A673 (cell line): ENCODE measurements at regions of chr17 and their contacts with region 1.

Region 1: DNA sequence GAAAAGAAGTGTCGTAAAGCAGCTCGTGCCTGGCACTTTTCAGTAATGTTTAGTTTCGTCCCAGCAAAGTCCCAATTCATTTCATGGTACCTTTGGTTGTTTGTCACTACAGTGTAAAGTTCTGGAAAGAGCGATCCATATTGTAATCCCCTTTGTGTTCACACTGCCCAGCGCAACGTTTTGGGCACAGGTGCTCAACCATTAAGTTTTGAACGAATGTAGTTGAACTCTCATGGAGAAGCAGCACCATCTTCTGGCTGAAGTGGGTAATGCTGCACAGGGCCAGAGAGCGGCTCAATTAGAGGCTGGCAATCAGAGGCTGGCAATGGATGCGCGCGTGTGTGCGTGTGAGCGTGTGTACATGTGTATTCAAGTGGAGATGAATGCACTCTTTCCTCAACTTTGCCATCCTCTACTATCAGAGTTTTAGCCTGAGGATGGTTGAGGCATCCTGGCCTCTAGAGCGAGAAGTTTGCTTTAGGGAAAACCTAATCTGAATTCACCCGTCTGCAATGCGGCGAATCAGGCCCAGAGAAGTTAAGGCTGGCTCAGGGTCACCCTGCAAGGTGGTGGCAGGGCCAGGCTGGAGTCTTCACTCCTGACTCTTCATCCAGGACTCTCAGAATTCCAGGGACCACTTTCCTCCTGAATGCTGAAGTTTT is 29.9 kb downstream of the DYNLL2 start:
- DNase-seq: peak; percentile 83
- H3K4me3 ChIP-seq: no peak overlapping the region
- H3K27ac ChIP-seq: no peak overlapping the region
- H3K4me1 ChIP-seq: no peaks in the 10 kb centered on the region
- H3K27me3 ChIP-seq: no peaks in the 10 kb centered on the region
- CTCF ChIP-seq: peak; percentile 98

Region 2: GRCh38 chr17:57130761-57131461 is 982.2 kb before region 1 on chr17:
- CTCF ChIA-PET with region 1: no interaction called
- POLR2A ChIA-PET with region 1: no interaction called
- intact Hi-C with region 1: loop called (anchors 5 kb)
- DNase-seq: peak; percentile 87
- H3K4me3 ChIP-seq: peak overlapping the region; percentile 28
- H3K27ac ChIP-seq: no peak overlapping the region
- H3K4me1 ChIP-seq: peaks cover 4% of the 10 kb centered on the region
- H3K27me3 ChIP-seq: no peaks in the 10 kb centered on the region
- CTCF ChIP-seq: peak; percentile 75

Region 3: DNA sequence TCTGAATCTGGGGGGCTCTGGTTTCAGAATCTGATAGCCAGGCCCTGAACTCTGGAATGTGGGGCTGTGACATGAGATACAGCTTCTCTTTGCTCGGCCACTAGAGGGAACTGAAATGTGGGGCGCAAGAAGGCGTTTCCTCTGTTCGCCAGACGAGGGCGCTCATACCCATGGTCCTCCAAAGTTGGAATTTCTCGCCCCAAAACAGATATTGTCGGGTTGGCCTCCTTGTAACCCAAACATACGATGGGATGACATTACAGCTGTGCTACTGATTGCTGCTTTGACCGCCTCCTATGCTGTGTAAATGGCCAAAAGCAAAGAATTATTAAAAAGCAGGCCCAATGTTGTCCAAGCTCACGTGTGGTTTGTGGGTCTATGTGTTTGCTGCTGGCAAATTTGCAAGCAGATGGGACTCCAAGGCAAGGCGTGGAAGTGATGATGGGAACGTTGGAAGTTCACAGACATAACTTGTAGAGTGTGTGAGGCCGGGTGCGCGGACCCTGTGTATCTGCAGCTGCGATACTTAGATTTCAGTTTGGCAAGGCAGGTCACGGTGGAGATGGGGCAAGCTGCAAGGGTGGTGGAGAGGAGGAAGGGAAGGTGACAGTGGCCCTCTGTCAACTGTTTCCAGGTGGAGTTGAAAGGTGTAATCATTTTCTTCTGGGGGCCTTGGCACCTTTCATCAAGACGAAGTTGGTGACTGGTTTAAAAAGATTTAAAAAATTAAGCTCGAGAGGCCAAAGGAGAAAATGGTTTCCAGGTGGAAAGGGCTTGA is 869.7 kb before region 1 on chr17:
- CTCF ChIA-PET with region 1: interaction called, 5 read pairs
- POLR2A ChIA-PET with region 1: no interaction called
- intact Hi-C with region 1: loop called (anchors 2 kb)
- DNase-seq: peak; percentile 79
- H3K4me3 ChIP-seq: no peak overlapping the region
- H3K27ac ChIP-seq: no peak overlapping the region
- H3K4me1 ChIP-seq: peaks cover 6% of the 10 kb centered on the region
- H3K27me3 ChIP-seq: no peaks in the 10 kb centered on the region
- CTCF ChIP-seq: peak; percentile 100

Region 4: DNA sequence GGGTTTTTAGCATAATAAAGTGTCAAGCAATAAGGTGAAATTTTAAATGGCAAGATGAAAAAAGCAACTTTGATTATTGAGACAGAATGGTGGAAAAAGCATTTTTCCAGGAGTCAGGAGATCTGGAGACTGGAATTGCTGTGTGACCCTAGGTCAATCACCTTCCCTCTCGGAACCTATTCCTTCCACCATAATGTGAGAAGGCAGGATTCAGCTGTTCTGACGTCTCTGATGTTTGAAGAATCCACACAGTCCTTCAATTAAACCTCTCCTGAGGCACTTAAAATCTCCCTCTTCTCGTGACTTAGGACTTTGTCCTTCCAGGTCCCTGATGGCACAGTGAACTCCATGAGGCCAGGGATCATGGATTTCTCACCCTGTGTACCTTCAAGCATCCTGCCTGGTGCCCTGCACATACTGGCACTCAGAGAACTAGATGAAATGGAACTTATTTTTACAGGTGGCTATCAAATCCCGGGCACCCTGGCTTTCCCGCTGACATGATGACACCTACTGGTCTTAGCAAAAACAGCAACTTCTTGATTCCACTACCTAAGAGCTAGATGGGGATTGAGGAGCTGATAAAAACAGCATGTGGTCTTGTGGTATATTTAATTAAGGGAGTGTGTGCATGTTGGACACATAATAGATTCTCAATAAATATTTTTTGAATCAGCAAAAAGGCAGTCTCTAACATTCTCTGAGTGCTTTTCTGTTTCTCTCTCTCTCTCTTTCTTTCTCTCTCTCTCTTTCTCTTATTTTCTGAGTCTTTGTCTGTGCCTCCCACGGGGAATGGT is 365.7 kb before region 1 on chr17:
- CTCF ChIA-PET with region 1: no interaction called
- POLR2A ChIA-PET with region 1: no interaction called
- intact Hi-C with region 1: loop called (anchors 10 kb)
- DNase-seq: peak; percentile 77
- H3K4me3 ChIP-seq: no peak overlapping the region
- H3K27ac ChIP-seq: no peak overlapping the region
- H3K4me1 ChIP-seq: no peaks in the 10 kb centered on the region
- H3K27me3 ChIP-seq: no peaks in the 10 kb centered on the region
- CTCF ChIP-seq: peak; percentile 90

Region 5: DNA sequence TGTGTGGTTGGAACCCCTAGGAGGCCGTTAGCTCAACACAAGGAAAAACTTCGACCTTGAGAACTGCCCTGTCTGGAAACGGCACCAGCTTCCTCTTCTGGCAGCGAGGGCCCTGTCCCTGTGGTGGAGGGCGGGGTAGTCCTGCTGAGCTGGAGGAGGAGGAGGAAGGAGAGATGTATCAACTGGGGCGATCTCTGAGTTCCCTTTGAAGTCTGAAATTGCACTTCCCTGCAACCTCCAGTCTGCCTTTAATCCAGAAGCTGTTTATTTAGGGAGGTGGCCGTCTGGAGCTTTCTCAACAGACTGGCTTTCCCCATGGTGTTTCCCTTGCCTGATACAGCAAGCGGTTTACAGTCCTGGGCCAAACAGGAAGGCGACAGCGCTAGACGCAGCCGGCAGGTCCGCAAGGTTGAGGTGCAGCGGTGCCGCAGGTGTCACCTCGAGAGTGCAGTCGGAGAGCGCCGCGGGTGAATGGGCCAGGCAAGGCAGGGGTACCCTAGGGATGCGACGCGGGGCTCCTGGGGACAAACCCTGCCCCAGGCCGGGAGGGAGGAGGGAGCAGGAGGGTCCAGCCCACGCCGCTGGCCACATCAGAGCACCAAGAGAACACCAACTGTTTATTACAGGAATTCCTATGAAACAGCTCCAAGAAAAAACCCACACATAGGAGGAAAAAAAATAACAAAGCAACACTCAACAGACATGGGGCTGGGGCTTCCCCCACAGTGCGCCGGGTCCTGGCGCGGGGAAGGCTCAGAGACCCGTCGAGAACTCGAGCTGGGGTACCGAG is 251.9 kb before region 1 on chr17:
- CTCF ChIA-PET with region 1: no interaction called
- POLR2A ChIA-PET with region 1: no interaction called
- intact Hi-C with region 1: loop called (anchors 1 kb)
- DNase-seq: peak; percentile 41
- H3K4me3 ChIP-seq: peak overlapping the region; percentile 31
- H3K27ac ChIP-seq: peak overlapping the region; percentile 22
- H3K4me1 ChIP-seq: peaks cover 20% of the 10 kb centered on the region
- H3K27me3 ChIP-seq: no peaks in the 10 kb centered on the region
- CTCF ChIP-seq: no peak

Region 6: DNA sequence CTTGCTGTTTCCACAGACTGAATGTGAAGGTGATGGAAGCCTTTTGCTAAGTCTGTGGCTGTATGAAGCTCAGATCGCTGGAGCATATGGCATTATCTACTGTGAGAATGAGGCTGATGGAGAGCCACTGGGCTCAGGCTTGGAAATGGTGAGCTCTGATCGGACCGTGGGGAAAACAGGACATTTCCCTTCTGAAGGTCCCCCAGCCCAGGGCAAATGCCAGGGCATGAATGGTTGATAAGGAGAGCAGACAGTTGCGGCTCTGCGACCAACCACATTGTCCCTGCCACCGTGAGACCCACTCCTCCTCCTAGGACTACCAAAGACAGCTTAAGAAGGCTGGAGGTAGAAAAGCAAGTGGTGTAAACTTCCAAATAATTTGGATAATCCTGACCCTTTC is 153.2 kb before region 1 on chr17:
- CTCF ChIA-PET with region 1: no interaction called
- POLR2A ChIA-PET with region 1: no interaction called
- intact Hi-C with region 1: no loop called
- DNase-seq: no peak
- H3K4me3 ChIP-seq: no peak overlapping the region
- H3K27ac ChIP-seq: no peak overlapping the region
- H3K4me1 ChIP-seq: peaks cover 10% of the 10 kb centered on the region
- H3K27me3 ChIP-seq: no peaks in the 10 kb centered on the region
- CTCF ChIP-seq: no peak

Region 7: DNA sequence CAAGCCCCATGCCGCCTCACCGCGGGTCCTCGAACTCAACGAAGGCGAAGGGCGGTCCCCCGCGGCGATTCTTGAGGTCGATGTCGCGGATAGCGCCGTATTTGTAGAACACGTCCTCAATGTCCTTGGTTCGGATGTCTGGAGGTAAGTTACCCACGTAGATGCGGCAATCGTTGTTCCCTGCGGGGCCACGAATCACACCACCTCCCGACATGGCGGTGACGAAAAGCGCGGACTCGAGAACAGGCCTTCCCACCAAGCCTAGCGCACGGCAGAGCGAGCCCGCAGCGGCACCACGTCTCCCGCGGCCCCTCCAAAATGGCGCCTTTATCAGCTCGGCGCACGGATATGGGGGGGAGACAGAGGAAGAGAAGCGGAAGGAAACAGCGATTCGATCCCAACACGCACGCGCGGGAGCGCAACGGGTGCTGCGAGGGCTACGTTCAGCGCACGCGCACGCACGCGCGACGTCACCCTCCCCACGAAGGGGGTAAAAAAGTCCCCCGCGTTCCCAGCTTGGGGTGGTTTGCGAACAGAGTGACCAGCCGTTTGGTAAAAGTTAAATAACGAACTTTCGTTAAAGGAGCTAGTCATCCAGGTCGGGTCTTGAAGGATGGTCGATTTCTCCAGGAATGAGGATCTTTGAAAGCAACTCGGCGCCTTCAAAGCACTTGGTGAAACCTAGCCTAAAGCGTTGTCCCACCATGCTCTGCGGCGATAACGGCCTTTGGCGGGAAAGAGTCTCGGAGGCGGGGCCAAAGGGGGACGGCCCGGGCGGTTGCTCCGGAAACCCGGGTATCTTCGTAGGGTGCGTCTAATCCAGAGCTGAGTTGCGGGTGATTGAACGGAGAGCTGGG is 105.9 kb before region 1 on chr17 and contains the start of gene SRSF1:
- CTCF ChIA-PET with region 1: no interaction called
- POLR2A ChIA-PET with region 1: no interaction called
- intact Hi-C with region 1: loop called (anchors 5 kb)
- DNase-seq: peak; percentile 99
- H3K4me3 ChIP-seq: peak within 1 kb of the TSS; percentile 88
- H3K27ac ChIP-seq: peak within 1 kb of the TSS; percentile 98
- H3K4me1 ChIP-seq: peaks cover 31% of the 10 kb centered on the region
- H3K27me3 ChIP-seq: no peaks in the 10 kb centered on the region
- CTCF ChIP-seq: no peak
- total RNA-seq, gene SRSF1: 491 and 512 TPM in 2 replicates

Region 8: DNA sequence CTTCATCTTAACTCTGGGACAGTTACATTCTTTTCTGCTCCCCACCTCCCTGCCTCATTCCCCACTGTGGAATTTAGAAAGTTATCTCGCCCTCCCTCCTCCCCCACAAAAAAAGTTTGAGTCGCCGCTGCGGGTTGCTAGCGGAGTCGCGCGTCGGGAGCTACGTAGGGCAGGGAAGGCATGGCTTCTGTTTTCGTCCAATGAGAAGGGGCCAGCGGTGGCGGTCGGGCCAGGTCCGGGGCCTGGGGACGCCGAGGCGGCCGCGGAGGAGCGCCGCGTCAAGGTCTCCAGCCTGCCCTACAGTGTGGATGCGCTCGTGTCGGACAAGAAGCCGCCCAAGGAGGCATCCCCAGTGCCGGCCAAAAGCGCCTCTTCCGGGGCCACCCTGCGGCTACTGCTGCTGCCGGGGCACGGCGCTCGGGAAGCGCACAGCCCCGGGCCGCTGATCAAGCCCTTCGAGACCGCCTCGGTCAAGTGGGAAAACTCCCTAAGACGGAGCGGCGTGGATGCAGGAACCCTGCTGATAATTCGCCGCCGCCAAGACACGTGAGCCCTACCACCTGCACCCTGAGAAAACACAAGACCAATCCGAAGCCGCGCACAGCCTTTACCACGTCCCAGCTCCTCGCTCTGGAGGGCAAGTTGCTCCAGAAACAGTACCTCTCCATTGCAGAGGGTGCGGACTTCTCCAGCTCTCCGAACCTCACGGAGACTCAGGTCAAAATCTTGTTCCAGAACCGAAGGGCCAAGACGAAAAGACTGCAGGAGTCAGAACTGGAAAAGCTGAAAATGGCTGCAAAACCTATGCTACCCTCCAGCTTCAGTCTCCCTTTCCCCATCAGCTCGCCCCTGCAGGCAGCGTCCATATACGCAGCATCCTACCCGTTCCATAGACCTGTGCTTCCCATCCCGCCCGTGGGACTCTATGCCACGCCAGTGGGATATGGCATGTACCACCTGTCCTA is 44.0 kb after region 1 on chr17:
- CTCF ChIA-PET with region 1: no interaction called
- POLR2A ChIA-PET with region 1: no interaction called
- intact Hi-C with region 1: no loop called
- DNase-seq: no peak
- H3K4me3 ChIP-seq: peak overlapping the region; percentile 22
- H3K27ac ChIP-seq: no peak overlapping the region
- H3K4me1 ChIP-seq: no peaks in the 10 kb centered on the region
- H3K27me3 ChIP-seq: peaks cover 98% of the 10 kb centered on the region
- CTCF ChIP-seq: no peak